HCT116 (cell line): ENCODE measurements at regions of chr15 and their contacts with region 1.

Region 1: DNA sequence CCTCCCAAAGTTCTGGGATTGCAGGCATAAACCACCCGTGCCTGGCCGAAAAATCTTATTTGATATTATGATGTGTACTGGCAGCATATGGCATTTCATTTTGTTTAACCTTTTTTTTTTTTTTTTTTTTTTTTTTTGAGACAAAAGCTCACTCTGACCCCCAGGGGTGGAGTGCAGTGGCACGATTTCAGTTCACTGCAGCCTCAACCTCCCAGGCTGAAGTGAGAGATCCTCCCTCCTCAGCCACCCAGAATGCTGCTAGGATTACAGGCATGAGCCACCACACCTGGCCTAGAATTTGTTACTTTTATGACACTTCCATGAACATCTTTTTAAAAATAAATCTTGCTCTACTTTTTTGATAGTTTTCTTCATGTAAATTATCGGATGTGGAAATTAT is 12.0 kb downstream of the TERB2 start:
- DNase-seq: no peak
- ATAC-seq: no peak
- H3K4me3 ChIP-seq: no peak overlapping the region
- H3K27ac ChIP-seq: no peak overlapping the region
- H3K4me1 ChIP-seq: no peaks in the 10 kb centered on the region
- H3K27me3 ChIP-seq: no peaks in the 10 kb centered on the region
- CTCF ChIP-seq: no peak
- POLR2A ChIP-seq: no peak
- RAD21 ChIP-seq: no peak

Region 2: DNA sequence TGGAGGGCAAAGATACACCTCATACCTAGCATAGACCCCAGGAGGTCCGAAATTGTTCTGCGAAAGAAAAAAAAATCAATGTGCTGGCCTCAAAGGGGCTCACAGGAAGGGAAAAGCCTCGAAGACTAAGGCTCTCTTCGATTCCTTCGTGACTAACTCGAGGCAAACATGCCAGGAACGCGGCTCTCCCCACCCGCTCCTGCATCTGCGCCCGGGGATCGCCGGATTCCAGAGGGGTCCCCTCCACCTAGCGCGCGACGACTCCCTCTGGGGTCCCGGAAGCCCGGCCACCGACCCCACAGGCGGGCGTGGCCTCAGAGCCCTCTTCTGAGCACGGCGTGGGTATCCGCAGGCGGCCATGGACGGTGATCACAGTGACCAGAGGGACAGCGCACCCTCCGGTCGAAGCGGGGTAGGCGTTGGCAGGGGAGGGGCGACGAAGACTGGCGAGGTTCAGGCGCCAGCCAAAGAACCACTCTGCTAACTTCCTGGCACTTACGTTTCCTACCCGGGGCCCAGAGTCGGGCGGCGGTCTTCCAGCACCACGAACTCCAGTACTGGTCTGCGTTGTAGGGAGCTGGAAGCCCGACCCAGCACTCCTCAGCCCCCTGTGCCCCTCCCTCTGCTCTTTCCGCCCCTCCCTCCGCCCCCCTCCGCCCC is 432.0 kb before region 1 on chr15:
- CTCF ChIA-PET with region 1: no interaction called
- POLR2A ChIA-PET with region 1: no interaction called
- RAD21 ChIA-PET with region 1: no interaction called
- intact Hi-C with region 1: no loop called
- DNase-seq: peak; percentile 64
- ATAC-seq: peak; percentile 84
- H3K4me3 ChIP-seq: peak overlapping the region; percentile 53 to 69
- H3K27ac ChIP-seq: peak overlapping the region; percentile 97
- H3K4me1 ChIP-seq: peaks cover 9 to 29% of the 10 kb centered on the region in 2 experiments; a peak in 3 of 4 replicates
- H3K27me3 ChIP-seq: no peaks in the 10 kb centered on the region
- CTCF ChIP-seq: peak; percentile 2 to 46 (median 23); a peak in 4 of 6 replicates
- POLR2A ChIP-seq: peak; percentile 73
- RAD21 ChIP-seq: 0 out of 2 replicates have a peak, but pooled peaks have one; percentile 10

Region 3: DNA sequence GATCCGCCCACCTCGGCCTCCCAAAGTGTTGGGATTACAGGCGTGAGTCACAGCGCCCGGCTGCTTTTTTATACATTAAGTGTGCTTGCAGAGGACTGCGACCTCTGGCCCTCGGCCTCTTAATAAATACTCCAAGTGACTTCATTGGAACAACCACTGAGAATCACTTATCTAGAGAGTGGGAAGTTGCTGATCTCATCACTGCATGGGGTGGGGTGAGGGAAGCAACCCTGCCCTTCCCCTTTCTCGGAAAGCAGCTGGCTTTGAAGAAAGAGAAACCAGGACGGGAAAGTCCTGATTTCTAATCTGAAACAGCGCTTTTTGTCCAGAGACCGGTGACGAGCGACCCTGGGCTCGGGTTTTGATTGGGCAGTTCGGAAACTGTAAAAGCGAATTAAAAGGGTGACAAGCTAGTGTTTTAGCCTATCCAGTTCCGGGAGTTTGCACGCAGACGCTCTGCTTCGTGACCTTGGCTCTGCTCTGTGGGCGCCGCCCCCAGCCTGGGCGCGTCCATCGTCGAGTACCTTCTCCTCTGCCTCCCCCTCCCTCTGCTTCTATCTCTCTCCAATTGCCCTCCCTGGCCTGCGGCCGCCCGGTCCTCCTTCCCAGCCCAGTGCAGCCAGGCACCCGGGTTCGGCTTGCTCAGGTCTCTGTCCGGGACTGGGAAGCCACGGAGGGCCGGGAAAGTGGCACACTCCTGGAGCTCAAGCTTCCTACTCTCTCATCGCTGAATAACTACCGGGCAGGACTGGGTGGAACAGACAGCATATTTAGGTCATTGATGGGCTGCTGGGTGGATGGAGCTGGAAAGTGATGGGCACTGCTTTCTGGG is 239.7 kb before region 1 on chr15:
- CTCF ChIA-PET with region 1: no interaction called
- POLR2A ChIA-PET with region 1: no interaction called
- RAD21 ChIA-PET with region 1: no interaction called
- intact Hi-C with region 1: no loop called
- DNase-seq: peak; percentile 94
- ATAC-seq: peak; percentile 92
- H3K4me3 ChIP-seq: peak overlapping the region; percentile 58 to 67
- H3K27ac ChIP-seq: peak overlapping the region; percentile 93
- H3K4me1 ChIP-seq: peaks cover 30 to 34% of the 10 kb centered on the region in 2 experiments
- H3K27me3 ChIP-seq: no peaks in the 10 kb centered on the region
- CTCF ChIP-seq: no peak
- POLR2A ChIP-seq: peak; percentile 73
- RAD21 ChIP-seq: no peak

Region 4: DNA sequence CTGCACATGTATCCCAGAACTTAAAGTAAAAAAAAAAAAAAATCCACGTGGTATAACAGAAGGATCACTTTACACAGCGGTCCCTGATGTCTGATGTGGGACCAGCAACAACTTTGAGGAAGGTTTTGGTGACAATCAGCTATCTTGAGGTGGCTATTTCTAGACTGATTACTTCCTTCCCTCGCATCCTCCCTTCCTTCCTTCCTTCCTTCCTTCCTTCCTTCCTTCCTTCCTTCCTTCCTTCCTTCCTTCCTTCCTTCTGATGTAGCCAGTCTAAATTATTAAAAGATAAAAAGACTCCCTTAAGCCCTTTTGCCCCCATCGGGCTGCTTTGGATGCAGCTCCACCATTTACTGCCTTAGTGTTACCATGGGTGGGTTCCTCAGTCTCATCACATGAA is 69.5 kb after region 1 on chr15:
- CTCF ChIA-PET with region 1: interaction called, 11 read pairs
- POLR2A ChIA-PET with region 1: interaction called, 3 read pairs
- RAD21 ChIA-PET with region 1: no interaction called
- intact Hi-C with region 1: loop called (anchors 2 kb)
- DNase-seq: no peak
- ATAC-seq: no peak
- H3K4me3 ChIP-seq: no peak overlapping the region
- H3K27ac ChIP-seq: no peak overlapping the region
- H3K4me1 ChIP-seq: no peaks in the 10 kb centered on the region
- H3K27me3 ChIP-seq: no peaks in the 10 kb centered on the region
- CTCF ChIP-seq: no peak
- POLR2A ChIP-seq: no peak
- RAD21 ChIP-seq: no peak

Region 5: GRCh38 chr15:45083223-45083622 is 114.7 kb after region 1 on chr15:
- CTCF ChIA-PET with region 1: no interaction called
- POLR2A ChIA-PET with region 1: no interaction called
- RAD21 ChIA-PET with region 1: no interaction called
- intact Hi-C with region 1: no loop called
- DNase-seq: no peak
- ATAC-seq: no peak
- H3K4me3 ChIP-seq: no peak overlapping the region
- H3K27ac ChIP-seq: no peak overlapping the region
- H3K4me1 ChIP-seq: no peaks in the 10 kb centered on the region
- H3K27me3 ChIP-seq: no peaks in the 10 kb centered on the region
- CTCF ChIP-seq: no peak
- POLR2A ChIP-seq: no peak
- RAD21 ChIP-seq: no peak

Region 6: DNA sequence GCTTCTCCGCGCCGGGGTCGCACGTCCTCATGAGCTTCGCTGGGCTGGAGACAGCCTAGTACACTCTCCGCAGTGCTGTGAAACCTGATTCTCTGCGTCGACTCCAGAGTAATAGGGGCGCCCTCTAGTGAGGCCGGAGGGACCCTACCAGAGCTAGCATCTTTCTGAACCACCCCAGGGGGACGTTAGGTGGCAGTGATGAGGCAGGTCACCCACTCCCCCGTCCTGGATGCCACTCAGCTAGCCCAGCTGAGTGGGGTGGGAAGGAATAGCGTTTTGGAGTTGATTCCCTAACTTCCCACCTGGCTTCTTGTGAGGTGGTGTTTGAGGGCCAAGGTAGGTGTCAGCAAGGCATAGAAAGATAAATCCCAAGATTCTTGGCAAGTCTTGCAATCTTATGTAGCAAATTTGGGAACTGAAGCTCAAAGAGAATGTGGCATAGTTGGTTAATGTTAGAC is 149.7 kb after region 1 on chr15:
- CTCF ChIA-PET with region 1: interaction called, 10 read pairs
- POLR2A ChIA-PET with region 1: no interaction called
- RAD21 ChIA-PET with region 1: no interaction called
- intact Hi-C with region 1: loop called (anchors 10 kb)
- DNase-seq: peak; percentile 75
- ATAC-seq: peak; percentile 99
- H3K4me3 ChIP-seq: no peak overlapping the region
- H3K27ac ChIP-seq: no peak overlapping the region
- H3K4me1 ChIP-seq: peaks cover 2 to 16% of the 10 kb centered on the region in 2 experiments; a peak in 3 of 4 replicates
- H3K27me3 ChIP-seq: no peaks in the 10 kb centered on the region
- CTCF ChIP-seq: peak; percentile 99 to 100 (median 99)
- POLR2A ChIP-seq: no peak
- RAD21 ChIP-seq: peak; percentile 79

Region 7: GRCh38 chr15:45126535-45127158 is 158.2 kb after region 1 on chr15:
- CTCF ChIA-PET with region 1: no interaction called
- POLR2A ChIA-PET with region 1: no interaction called
- RAD21 ChIA-PET with region 1: no interaction called
- intact Hi-C with region 1: loop called (anchors 10 kb)
- DNase-seq: peak; percentile 36
- ATAC-seq: peak; percentile 57
- H3K4me3 ChIP-seq: no peak overlapping the region
- H3K27ac ChIP-seq: no peak overlapping the region
- H3K4me1 ChIP-seq: peaks cover 9 to 22% of the 10 kb centered on the region in 2 experiments
- H3K27me3 ChIP-seq: no peaks in the 10 kb centered on the region
- CTCF ChIP-seq: peak; percentile 71 to 92 (median 78)
- POLR2A ChIP-seq: no peak
- RAD21 ChIP-seq: peak; percentile 68